Heart left ventricle (tissue), 16 donors: ENCODE measurements at regions of chr10 and their contacts with region 1.

Region 1: DNA sequence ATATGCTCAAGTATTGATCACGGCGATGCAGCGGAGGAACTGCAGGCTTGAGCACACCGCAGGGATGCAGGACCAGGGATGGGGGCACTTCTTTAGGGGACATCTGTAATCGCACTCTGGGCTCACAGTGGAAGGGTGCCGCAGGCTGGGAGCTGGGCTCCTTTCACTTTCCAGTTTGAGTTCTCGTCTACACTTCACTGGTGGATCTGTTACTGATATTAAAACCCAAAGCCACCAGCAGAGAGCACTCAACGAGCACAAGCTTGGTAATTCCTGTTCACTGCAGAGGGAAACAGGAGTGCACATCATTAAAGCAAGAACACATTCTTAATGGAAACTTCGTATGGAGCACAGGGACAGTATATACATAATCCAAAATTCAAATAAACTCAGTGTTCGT is 91.3 kb downstream of the PARD3 start:
- DNase-seq: peak in 4 of 5 donors; percentile 37 to 54 (median 40)
- ATAC-seq: peak in 3 of 4 donors; percentile 74 to 83 (median 76)
- H3K4me3 ChIP-seq: no peak overlapping the region
- H3K27ac ChIP-seq: peak overlapping the region in 2 of 12 donors; percentile 22 to 34
- H3K4me1 ChIP-seq: peaks cover 2 to 53% (median 15%) of the 10 kb centered on the region in 12 donors
- H3K27me3 ChIP-seq: no peaks in the 10 kb centered on the region
- CTCF ChIP-seq: peak; percentile 28 to 71 (median 55)
- POLR2A ChIP-seq: no peak

Region 2: DNA sequence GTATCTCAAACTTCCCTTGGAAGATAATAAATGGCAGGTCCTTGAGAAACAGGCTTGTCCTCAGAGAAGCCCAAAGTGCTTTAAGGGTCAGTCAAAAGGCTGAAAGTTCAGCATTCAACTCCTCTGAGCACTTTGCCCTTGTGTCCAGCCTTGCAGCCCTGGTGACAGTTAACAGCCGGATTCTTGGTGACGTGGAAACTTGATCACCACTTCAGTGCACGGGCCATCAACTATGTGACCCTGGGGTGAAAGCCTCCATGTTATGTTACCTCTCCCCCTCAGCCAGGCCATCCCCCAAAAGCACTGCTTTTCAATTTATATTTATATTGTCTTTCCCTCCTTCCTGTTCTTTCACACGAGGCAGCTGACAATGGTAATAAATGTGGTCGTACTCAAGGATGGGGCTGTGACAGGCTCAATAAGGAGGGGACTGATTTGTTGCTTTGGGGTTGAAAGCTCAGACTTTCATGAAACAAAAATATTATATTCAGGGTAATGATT is 1225.3 kb before region 1 on chr10:
- intact Hi-C with region 1: no loop called
- DNase-seq: no peak
- ATAC-seq: no peak
- H3K4me3 ChIP-seq: no peak overlapping the region
- H3K27ac ChIP-seq: no peak overlapping the region
- H3K4me1 ChIP-seq: peaks cover 0 to 18% (median 0%) of the 10 kb centered on the region in 12 donors
- H3K27me3 ChIP-seq: no peaks in the 10 kb centered on the region
- CTCF ChIP-seq: no peak
- POLR2A ChIP-seq: no peak

Region 3: GRCh38 chr10:34666008-34666705 is 57.6 kb before region 1 on chr10:
- intact Hi-C with region 1: loop called in 2 of 10 experiments (anchors 5 to 10 kb)
- DNase-seq: peak in 1 of 5 donors; percentile 36
- ATAC-seq: peak in 3 of 4 donors; percentile 80 to 85 (median 84)
- H3K4me3 ChIP-seq: no peak overlapping the region
- H3K27ac ChIP-seq: no peak overlapping the region
- H3K4me1 ChIP-seq: peaks cover 0 to 23% (median 2%) of the 10 kb centered on the region in 12 donors
- H3K27me3 ChIP-seq: no peaks in the 10 kb centered on the region
- CTCF ChIP-seq: peak; percentile 28 to 67 (median 54)
- POLR2A ChIP-seq: no peak

Region 4: GRCh38 chr10:34933676-34934075 is 209.9 kb after region 1 on chr10:
- intact Hi-C with region 1: loop called in 1 of 10 experiments (anchors 10 kb)
- DNase-seq: peak; percentile 29 to 76 (median 69)
- ATAC-seq: peak; percentile 67 to 90 (median 74)
- H3K4me3 ChIP-seq: no peak overlapping the region
- H3K27ac ChIP-seq: peak overlapping the region in 2 of 12 donors; percentile 8 to 44
- H3K4me1 ChIP-seq: peaks cover 0 to 12% (median 2%) of the 10 kb centered on the region in 12 donors
- H3K27me3 ChIP-seq: no peaks in the 10 kb centered on the region
- CTCF ChIP-seq: no peak
- POLR2A ChIP-seq: no peak

Region 5: DNA sequence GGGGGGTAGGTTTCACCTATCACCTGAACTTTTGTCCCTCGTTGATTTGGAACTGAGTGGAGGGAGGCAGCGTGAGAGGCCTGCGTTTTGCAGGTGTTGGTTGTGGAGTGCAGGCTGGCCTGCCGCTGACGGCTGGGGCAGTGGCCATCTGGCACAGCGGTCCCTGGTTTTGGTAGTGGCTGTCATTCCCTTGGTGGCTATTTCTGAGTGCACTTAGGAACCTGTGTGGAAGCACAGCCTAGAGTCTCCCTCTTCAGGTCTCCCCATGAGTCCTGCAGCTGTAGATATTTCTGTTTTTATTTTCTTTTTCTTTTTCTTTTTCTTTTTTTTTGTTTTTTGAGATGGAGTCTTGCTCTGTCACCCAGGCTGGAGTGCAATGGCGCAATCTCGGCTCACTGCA is 237.2 kb after region 1 on chr10:
- intact Hi-C with region 1: loop called in 6 of 10 experiments (anchors 5 to 10 kb)
- DNase-seq: peak in 4 of 5 donors; percentile 20 to 69 (median 30)
- ATAC-seq: peak; percentile 81 to 96 (median 94)
- H3K4me3 ChIP-seq: no peak overlapping the region
- H3K27ac ChIP-seq: no peak overlapping the region
- H3K4me1 ChIP-seq: no peaks in the 10 kb centered on the region
- H3K27me3 ChIP-seq: no peaks in the 10 kb centered on the region
- CTCF ChIP-seq: peak in 10 of 12 donors; percentile 7 to 57 (median 36)
- POLR2A ChIP-seq: no peak

Region 6: GRCh38 chr10:34967335-34967880 is 243.7 kb after region 1 on chr10:
- intact Hi-C with region 1: loop called in 6 of 10 experiments (anchors 5 to 10 kb)
- DNase-seq: peak; percentile 31 to 73 (median 48)
- ATAC-seq: peak in 3 of 4 donors; percentile 30 to 79 (median 78)
- H3K4me3 ChIP-seq: no peak overlapping the region
- H3K27ac ChIP-seq: peak overlapping the region in 3 of 12 donors; percentile 18 to 42 (median 36)
- H3K4me1 ChIP-seq: peaks cover 0 to 21% (median 0%) of the 10 kb centered on the region in 12 donors
- H3K27me3 ChIP-seq: no peaks in the 10 kb centered on the region
- CTCF ChIP-seq: no peak
- POLR2A ChIP-seq: no peak

Region 7: DNA sequence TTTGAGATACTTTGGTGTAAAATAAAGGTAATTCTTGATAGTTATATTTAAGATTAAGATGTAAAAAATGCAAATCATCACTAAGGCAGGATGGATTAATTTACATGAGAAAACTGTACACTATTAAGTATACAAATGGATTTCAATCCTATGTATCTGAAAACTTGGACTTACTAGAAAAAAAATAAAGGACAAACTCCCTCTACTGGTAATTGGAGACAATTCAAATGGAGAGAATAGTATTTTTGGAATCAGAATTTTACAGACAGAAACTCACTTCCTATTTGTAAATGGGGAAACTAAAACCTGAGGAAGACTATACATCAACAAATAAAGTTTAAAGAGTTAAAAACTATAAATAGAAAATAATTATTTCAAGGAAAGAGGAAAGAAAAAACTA is 303.8 kb after region 1 on chr10:
- intact Hi-C with region 1: loop called in 4 of 10 experiments (anchors 5 to 10 kb)
- DNase-seq: no peak
- ATAC-seq: no peak
- H3K4me3 ChIP-seq: no peak overlapping the region
- H3K27ac ChIP-seq: no peak overlapping the region
- H3K4me1 ChIP-seq: no peaks in the 10 kb centered on the region
- H3K27me3 ChIP-seq: no peaks in the 10 kb centered on the region
- CTCF ChIP-seq: peak in 11 of 12 donors; percentile 12 to 57 (median 39)
- POLR2A ChIP-seq: no peak